ENCODE measurements at regions of chr1 and their contacts with region 1.

Region 1: GRCh38 chr1:165928075-165928731 is 100.8 kb downstream of the UCK2 start:
- DNase-seq: no peak
- ATAC-seq: peak in 1 of 2 donors; percentile 22
- H3K4me3 ChIP-seq: no peak overlapping the region
- H3K27ac ChIP-seq: no peak overlapping the region
- H3K4me1 ChIP-seq: no peaks in the 10 kb centered on the region
- H3K27me3 ChIP-seq: no peaks in the 10 kb centered on the region

Region 2: GRCh38 chr1:165857046-165857801 is 71.0 kb before region 1 on chr1:
- intact Hi-C with region 1: no loop called
- DNase-seq: no peak
- ATAC-seq: peak; percentile 43 to 54
- H3K4me3 ChIP-seq: no peak overlapping the region
- H3K27ac ChIP-seq: no peak overlapping the region
- H3K4me1 ChIP-seq: peaks cover 10% of the 10 kb centered on the region
- H3K27me3 ChIP-seq: no peaks in the 10 kb centered on the region

Region 3: GRCh38 chr1:166119471-166119965 is 191.3 kb after region 1 on chr1:
- intact Hi-C with region 1: no loop called
- DNase-seq: no peak
- ATAC-seq: peak in 1 of 2 donors; percentile 26
- H3K4me3 ChIP-seq: no peak overlapping the region
- H3K27ac ChIP-seq: no peak overlapping the region
- H3K4me1 ChIP-seq: no peaks in the 10 kb centered on the region
- H3K27me3 ChIP-seq: no peaks in the 10 kb centered on the region

Region 4: GRCh38 chr1:166166695-166167571 is 238.7 kb after region 1 on chr1 and contains the start of gene FAM78B:
- intact Hi-C with region 1: loop called in 2 of 4 experiments (anchors 5 kb)
- DNase-seq: peak; percentile 80 to 92 (median 88)
- ATAC-seq: peak; percentile 95 to 96
- H3K4me3 ChIP-seq: peak within 1 kb of the TSS; percentile 65
- H3K27ac ChIP-seq: peak within 1 kb of the TSS; percentile 14
- H3K4me1 ChIP-seq: peaks cover 3% of the 10 kb centered on the region
- H3K27me3 ChIP-seq: no peaks in the 10 kb centered on the region
- total RNA-seq, gene FAM78B: 3.7 to 4.9 (median 4.4) TPM

Region 5: DNA sequence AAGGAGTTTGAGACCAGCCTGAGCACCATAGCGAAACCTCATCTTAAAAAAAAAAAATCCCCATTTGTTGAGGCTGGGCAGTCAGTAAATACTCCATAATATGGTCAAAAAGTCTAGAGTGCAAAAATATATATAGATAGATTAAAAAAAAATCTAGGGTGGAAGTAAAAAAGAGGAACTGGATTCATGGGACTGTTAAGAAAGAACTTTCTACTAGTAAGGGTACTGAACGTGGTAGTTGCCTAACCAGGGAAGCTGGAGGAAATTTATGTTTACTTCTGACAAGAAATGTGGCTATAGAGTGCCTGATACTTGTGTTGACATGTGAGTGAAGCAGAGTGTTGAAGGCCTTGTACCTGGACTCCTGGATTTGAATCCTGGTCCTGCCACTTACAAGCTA is 504.5 kb after region 1 on chr1:
- intact Hi-C with region 1: loop called (anchors 5 to 10 kb)
- DNase-seq: no peak
- ATAC-seq: no peak
- H3K4me3 ChIP-seq: no peak overlapping the region
- H3K27ac ChIP-seq: no peak overlapping the region
- H3K4me1 ChIP-seq: no peaks in the 10 kb centered on the region
- H3K27me3 ChIP-seq: no peaks in the 10 kb centered on the region

Region 6: GRCh38 chr1:166479052-166479631 is 550.9 kb after region 1 on chr1:
- intact Hi-C with region 1: loop called in 3 of 4 experiments (anchors 5 to 10 kb)
- DNase-seq: peak; percentile 22 to 51 (median 47)
- ATAC-seq: no peak
- H3K4me3 ChIP-seq: no peak overlapping the region
- H3K27ac ChIP-seq: no peak overlapping the region
- H3K4me1 ChIP-seq: no peaks in the 10 kb centered on the region
- H3K27me3 ChIP-seq: no peaks in the 10 kb centered on the region

Region 7: DNA sequence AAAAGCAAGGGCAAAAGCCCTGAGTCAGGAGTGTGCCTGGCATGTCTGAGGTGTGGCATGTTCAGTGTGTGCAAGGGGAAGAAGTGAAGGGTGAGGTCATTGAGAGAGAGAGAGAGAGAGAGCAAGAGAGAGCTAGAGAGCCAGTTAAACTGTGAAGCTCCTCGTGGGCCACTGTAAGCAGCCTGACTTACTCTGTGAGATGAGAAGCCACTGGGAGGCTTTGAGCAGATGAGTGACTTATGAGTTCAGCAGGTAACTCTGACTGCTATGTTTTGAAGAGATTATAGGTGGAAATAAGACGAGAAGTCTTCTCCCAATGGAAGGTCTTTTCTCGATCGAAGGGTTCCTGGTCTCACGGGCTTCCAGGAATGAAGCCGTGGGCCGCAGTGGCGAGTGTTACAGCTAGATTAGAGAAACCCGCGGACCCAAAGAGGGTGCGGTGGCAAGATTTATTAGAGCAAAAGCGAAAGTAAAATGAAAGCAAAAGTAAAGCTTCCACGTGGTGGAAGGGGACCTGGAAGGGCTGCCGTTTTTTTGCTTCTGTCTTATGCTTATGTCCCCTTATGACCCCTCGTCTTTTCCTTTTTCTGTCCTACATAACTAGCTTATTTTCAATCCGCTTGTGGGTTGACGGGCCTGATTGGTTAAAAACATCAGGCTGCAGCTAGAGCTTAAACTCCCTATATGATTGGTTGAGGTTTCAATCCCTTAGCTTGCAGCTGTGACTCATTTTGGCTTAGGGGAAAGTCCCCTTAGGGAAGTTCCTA is 561.6 kb after region 1 on chr1:
- intact Hi-C with region 1: loop called in 2 of 4 experiments (anchors 10 kb)
- DNase-seq: peak in 2 of 3 donors; percentile 6 to 30
- ATAC-seq: peak; percentile 43 to 54
- H3K4me3 ChIP-seq: peak overlapping the region; percentile 42
- H3K27ac ChIP-seq: peak overlapping the region; percentile 43
- H3K4me1 ChIP-seq: no peaks in the 10 kb centered on the region
- H3K27me3 ChIP-seq: no peaks in the 10 kb centered on the region